ENCODE measurements at regions of chr11 and their contacts with region 1.

Region 1: GRCh38 chr11:64846998-64847666 is 2.7 kb upstream of the CDC42BPG start:
- DNase-seq: peak; percentile 94
- ATAC-seq: peak; percentile 92

Region 2: DNA sequence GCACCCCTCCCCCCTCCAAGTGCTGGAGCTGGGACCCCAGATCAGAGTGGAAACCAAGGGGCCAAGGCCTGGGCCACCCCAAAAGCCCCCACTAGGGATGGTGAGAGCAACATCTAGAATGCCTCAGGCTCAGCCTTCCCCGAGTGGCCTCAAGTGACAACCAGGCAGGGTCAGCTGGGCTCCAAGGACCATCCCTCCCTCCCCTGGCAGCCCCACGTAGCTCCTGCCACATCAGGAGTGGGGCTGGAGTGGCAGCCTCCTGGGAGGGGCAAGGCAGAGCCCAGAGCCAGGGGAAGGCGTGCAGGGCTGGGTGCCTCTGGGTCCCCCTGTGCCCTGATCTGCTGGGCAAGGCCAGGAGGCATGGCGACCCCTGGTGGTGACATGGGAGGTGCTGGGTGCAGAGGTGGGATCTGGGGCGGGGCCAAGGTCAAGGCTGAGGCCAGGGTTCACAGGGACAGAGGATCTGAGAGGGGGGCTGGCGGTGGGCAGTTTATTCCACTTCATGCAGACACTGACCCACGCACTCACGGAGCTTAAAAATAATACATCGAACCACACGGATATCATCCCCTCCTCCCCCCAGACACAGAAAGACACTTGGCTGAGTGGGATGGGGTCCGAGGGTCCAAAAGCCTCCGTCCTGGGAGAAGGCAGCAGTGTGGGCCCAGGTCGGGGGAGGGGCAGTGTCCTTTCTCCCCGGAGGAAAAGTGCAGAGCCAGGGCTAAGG is 47.1 kb after region 1 on chr11:
- intact Hi-C with region 1: loop called (anchors 1 kb)
- DNase-seq: peak; percentile 95
- ATAC-seq: peak; percentile 86

Region 3: GRCh38 chr11:64996710-64997380 is 149.7 kb after region 1 on chr11 and contains the start of gene BATF2:
- intact Hi-C with region 1: no loop called
- DNase-seq: peak; percentile 79
- ATAC-seq: peak; percentile 86
- total RNA-seq, gene BATF2: 2.0 TPM

Region 4: GRCh38 chr11:65013692-65014145 is 166.6 kb after region 1 on chr11:
- intact Hi-C with region 1: loop called (anchors 10 kb)
- DNase-seq: peak; percentile 96
- ATAC-seq: peak; percentile 97

Region 5: GRCh38 chr11:65117216-65118096 is 270.3 kb after region 1 on chr11 and contains the start of gene ZNHIT2:
- intact Hi-C with region 1: loop called (anchors 10 kb)
- DNase-seq: peak; percentile 100
- ATAC-seq: peak; percentile 88
- total RNA-seq, gene ZNHIT2: 5.7 TPM

Measured in Right ventricle myocardium superior (tissue), 1 donor.